B cell (primary cell): ENCODE measurements at regions of chr16 and their contacts with region 1.

Region 1: GRCh38 chr16:10509534-10510025 is 70.8 kb downstream of the EMP2 start:
- DNase-seq: peak; percentile 87
- ATAC-seq: peak; percentile 95
- H3K4me3 ChIP-seq: no peak overlapping the region
- H3K4me3 Mint-ChIP-seq: no peak overlapping the region
- H3K27ac ChIP-seq: no peak overlapping the region
- H3K27ac Mint-ChIP-seq: peak overlapping the region; percentile 75
- H3K4me1 ChIP-seq: peaks cover 4 to 10% of the 10 kb centered on the region in 2 donors
- H3K4me1 Mint-ChIP-seq: peaks cover 16% of the 10 kb centered on the region
- H3K27me3 ChIP-seq: no peaks in the 10 kb centered on the region
- H3K27me3 Mint-ChIP-seq: no peaks in the 10 kb centered on the region
- CTCF ChIP-seq: peak; percentile 84

Region 2: DNA sequence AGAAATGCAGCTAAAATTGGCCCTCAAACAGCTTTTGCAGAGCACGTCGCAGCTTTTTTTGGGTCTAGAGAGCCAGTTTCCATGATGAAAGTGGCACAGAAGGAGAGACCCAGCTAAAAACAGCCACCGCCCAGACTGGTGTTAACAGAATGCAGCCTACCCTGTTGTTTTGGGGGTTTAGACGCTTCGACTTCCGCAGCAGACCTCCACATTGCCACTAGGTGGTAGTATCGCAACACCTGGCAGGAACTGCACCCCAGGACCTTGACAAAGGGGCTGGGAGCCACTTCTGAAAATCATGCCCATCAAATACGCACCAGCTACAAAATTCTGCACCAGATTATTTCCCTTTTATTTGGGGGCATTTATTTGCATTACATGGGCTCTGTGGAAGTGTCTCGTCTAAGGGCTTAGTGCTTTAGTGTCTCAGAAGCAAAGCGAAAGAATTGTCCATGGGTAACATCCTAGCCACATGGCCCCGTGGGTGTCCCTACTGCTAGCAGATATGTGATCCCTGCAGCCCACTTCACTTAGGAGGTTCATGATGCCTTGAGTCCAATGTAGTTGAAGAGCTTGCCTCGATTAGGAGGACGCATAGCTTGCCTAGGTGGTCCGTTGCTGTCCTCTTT is 1251.0 kb before region 1 on chr16:
- CTCF ChIA-PET with region 1: no interaction called
- POLR2A ChIA-PET with region 1: no interaction called
- intact Hi-C with region 1: loop called (anchors 2 kb)
- DNase-seq: peak; percentile 37
- ATAC-seq: no peak
- H3K4me3 ChIP-seq: no peak overlapping the region
- H3K4me3 Mint-ChIP-seq: no peak overlapping the region
- H3K27ac ChIP-seq: no peak overlapping the region
- H3K27ac Mint-ChIP-seq: no peak overlapping the region
- H3K4me1 ChIP-seq: no peaks in the 10 kb centered on the region
- H3K4me1 Mint-ChIP-seq: no peaks in the 10 kb centered on the region
- H3K27me3 ChIP-seq: peaks cover 0 to 14% (median 4%) of the 10 kb centered on the region in 4 experiments
- H3K27me3 Mint-ChIP-seq: peaks cover 47% of the 10 kb centered on the region
- CTCF ChIP-seq: peak; percentile 51

Region 3: GRCh38 chr16:10314811-10315210 is 194.8 kb before region 1 on chr16:
- CTCF ChIA-PET with region 1: interaction called, 230 read pairs
- POLR2A ChIA-PET with region 1: interaction called, 4 read pairs
- intact Hi-C with region 1: loop called (anchors 1 kb)
- DNase-seq: peak; percentile 47
- ATAC-seq: peak; percentile 46
- H3K4me3 ChIP-seq: no peak overlapping the region
- H3K4me3 Mint-ChIP-seq: peak overlapping the region; percentile 23
- H3K27ac ChIP-seq: no peak overlapping the region
- H3K27ac Mint-ChIP-seq: peak overlapping the region; percentile 73
- H3K4me1 ChIP-seq: peaks cover 18 to 32% of the 10 kb centered on the region in 2 donors
- H3K4me1 Mint-ChIP-seq: peaks cover 28% of the 10 kb centered on the region
- H3K27me3 ChIP-seq: no peaks in the 10 kb centered on the region
- H3K27me3 Mint-ChIP-seq: no peaks in the 10 kb centered on the region
- CTCF ChIP-seq: peak; percentile 33

Region 4: GRCh38 chr16:10731790-10732189 is 222.2 kb after region 1 on chr16:
- CTCF ChIA-PET with region 1: interaction called, 203 read pairs
- POLR2A ChIA-PET with region 1: interaction called, 3 read pairs
- intact Hi-C with region 1: no loop called
- DNase-seq: no peak
- ATAC-seq: no peak
- H3K4me3 ChIP-seq: no peak overlapping the region
- H3K4me3 Mint-ChIP-seq: no peak overlapping the region
- H3K27ac ChIP-seq: no peak overlapping the region
- H3K27ac Mint-ChIP-seq: no peak overlapping the region
- H3K4me1 ChIP-seq: no peaks in the 10 kb centered on the region
- H3K4me1 Mint-ChIP-seq: no peaks in the 10 kb centered on the region
- H3K27me3 ChIP-seq: no peaks in the 10 kb centered on the region
- H3K27me3 Mint-ChIP-seq: no peaks in the 10 kb centered on the region
- CTCF ChIP-seq: no peak

Region 5: GRCh38 chr16:10888320-10888937 is 378.8 kb after region 1 on chr16:
- CTCF ChIA-PET with region 1: interaction called, 13 read pairs
- POLR2A ChIA-PET with region 1: no interaction called
- intact Hi-C with region 1: no loop called
- DNase-seq: peak; percentile 69
- ATAC-seq: peak; percentile 15
- H3K4me3 ChIP-seq: peak overlapping the region; percentile 41 to 76 (median 47)
- H3K4me3 Mint-ChIP-seq: peak overlapping the region; percentile 81
- H3K27ac ChIP-seq: peak overlapping the region; percentile 74 to 85
- H3K27ac Mint-ChIP-seq: peak overlapping the region; percentile 87
- H3K4me1 ChIP-seq: peaks cover 98 to 100% of the 10 kb centered on the region in 2 donors
- H3K4me1 Mint-ChIP-seq: peaks cover 96% of the 10 kb centered on the region
- H3K27me3 ChIP-seq: no peaks in the 10 kb centered on the region
- H3K27me3 Mint-ChIP-seq: no peaks in the 10 kb centered on the region
- CTCF ChIP-seq: no peak